ENCODE measurements at regions of chr19 and their contacts with region 1.

Region 1: DNA sequence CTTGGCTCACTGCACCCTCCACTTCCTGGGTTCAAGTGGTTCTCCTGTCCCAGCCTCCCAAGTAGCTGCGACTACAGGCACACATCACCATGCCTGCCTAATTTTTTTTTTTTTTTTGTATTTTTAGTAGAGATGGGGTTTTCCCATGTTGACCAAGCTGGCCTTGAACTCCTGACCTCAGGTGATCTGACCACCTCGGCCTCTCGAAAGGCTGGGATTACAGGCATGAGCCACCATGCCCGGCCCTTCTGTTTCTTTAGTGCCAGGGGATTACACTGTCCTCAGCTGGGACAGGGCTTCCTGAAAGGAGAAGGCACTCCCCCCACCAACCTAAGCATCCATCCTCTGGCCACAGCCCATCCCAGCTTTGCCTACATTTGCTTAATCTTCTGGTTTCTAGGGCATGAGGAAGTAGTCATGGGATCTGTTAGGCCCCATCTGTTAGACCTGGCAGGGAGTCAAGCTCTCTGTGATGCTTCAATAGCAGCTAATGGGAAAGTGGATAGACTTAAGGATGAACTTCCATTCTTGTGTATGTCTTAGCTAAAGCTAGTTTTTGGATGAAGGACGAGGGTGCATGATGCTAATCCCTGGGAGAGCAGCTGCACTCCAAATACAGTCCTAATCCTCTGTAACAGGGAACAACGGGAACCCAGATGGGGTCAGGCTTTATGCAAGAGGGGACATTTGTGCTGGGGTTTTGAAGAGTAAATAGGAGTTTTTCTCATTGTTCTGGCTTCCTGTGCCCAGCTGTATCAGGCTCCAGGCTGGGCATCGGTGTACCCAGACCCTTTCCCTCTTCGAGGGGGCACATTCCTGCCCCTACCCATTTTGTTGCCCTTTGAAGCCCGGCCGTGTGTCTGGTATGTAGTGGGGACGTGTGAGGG is 2.6 kb downstream of the VAV1 start:
- DNase-seq: no peak
- ATAC-seq: no peak
- H3K4me3 ChIP-seq: no peak overlapping the region
- H3K27ac ChIP-seq: no peak overlapping the region
- H3K4me1 ChIP-seq: no peaks in the 10 kb centered on the region
- H3K27me3 ChIP-seq: no peaks in the 10 kb centered on the region
- CTCF ChIP-seq: no peak

Region 2: GRCh38 chr19:6856749-6857372 is 81.8 kb after region 1 on chr19:
- CTCF ChIA-PET with region 1: no interaction called
- POLR2A ChIA-PET with region 1: interaction called, 10 read pairs
- in situ Hi-C with region 1: no loop called
- intact Hi-C with region 1: no loop called
- DNase-seq: no peak
- ATAC-seq: no peak
- H3K4me3 ChIP-seq: no peak overlapping the region
- H3K27ac ChIP-seq: no peak overlapping the region
- H3K4me1 ChIP-seq: no peaks in the 10 kb centered on the region
- H3K27me3 ChIP-seq: no peaks in the 10 kb centered on the region
- CTCF ChIP-seq: no peak

Region 3: DNA sequence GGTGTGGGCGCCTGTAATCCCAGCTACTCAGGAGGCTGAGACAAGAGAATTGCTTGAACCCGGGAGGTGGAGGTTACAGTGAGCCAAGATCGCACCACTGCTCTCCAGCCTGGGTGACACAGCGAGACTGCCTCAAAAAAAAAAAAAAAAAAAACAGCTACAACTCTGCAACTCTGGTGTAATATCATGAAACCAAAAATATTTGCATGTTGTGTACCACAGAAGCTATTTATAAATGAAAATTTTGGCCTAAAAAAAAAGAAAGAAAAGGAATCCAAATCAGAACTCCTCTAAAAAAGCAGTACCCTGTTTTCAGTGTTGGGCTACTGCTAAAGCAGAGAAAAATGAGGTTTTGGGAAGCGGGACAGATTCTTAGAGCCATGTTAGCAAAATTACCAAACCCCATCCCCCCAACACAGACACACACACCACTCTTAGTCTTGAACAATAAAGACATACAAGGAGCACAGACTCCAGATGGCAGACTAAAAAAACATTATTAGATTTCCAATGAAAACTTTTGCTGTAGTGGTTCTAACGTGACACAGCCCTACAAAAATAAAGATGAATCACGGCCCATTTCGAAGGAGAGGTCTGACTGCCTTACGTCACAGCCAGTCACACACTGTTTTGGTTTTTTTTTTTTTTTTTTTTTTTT is 467.7 kb after region 1 on chr19:
- CTCF ChIA-PET with region 1: no interaction called
- POLR2A ChIA-PET with region 1: interaction called, 16 read pairs
- in situ Hi-C with region 1: no loop called
- intact Hi-C with region 1: no loop called
- DNase-seq: no peak
- ATAC-seq: no peak
- H3K4me3 ChIP-seq: no peak overlapping the region
- H3K27ac ChIP-seq: no peak overlapping the region
- H3K4me1 ChIP-seq: no peaks in the 10 kb centered on the region
- H3K27me3 ChIP-seq: no peaks in the 10 kb centered on the region
- CTCF ChIP-seq: no peak